ENCODE measurements at regions of chr1 and their contacts with region 1.

Region 1: DNA sequence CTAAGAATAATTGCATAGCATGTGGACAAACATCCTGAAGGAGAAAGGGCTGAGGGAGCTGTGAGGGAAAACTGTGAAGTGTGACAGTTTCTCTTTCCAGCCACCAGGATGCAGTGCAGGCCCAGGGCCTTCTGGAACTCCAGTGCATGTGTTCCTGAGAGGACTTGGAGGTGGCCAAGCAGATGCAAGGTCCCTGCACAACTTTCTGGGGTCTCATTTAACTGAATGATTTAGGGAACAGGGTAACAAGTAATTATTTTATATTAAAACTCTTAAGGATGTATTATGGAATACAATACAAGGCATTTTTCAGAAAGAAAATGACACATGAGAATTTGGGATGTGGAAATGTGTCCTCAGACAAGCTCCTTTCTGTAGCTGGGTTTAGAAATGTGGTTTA is 61.2 kb upstream of the MCOLN3 start:
- ATAC-seq: peak in 5 of 8 experiments; percentile 50 to 93 (median 78)
- H3K4me3 ChIP-seq: no peak overlapping the region
- H3K27ac ChIP-seq: no peak overlapping the region
- H3K4me1 ChIP-seq: no peaks in the 10 kb centered on the region

Region 2: GRCh38 chr1:84973498-84974334 is 135.8 kb before region 1 on chr1:
- in situ Hi-C with region 1: no loop called
- ATAC-seq: no peak
- H3K4me3 ChIP-seq: no peak overlapping the region
- H3K27ac ChIP-seq: no peak overlapping the region
- H3K4me1 ChIP-seq: peaks cover 0 to 4% of the 10 kb centered on the region in 2 donors

Region 3: DNA sequence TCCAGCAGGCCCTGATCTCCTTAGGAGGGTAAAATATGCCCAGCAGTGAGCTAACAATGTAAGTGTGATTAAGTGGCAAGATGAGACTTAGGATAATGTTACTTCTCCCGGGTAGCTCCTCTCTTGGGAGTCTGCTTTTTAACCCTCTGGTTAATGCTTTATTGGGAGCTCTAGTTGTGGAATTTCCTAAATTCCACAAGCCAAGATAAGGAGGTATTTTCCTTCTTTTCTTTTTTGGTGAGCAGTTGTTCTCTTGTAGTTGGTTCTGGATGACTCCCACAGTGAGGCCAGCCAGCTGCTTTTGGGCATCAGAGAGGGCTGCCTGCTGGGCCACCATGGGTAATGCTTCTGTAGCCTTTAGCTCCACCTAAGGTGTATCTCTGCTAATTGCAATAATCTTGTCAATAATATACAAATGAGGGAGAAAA is 130.7 kb after region 1 on chr1:
- in situ Hi-C with region 1: loop called in 1 of 9 experiments (anchors 10 kb)
- ATAC-seq: peak in 3 of 8 experiments; percentile 42 to 61 (median 54)
- H3K4me3 ChIP-seq: no peak overlapping the region
- H3K27ac ChIP-seq: no peak overlapping the region
- H3K4me1 ChIP-seq: no peaks in the 10 kb centered on the region

Region 4: GRCh38 chr1:85259118-85259911 is 149.8 kb after region 1 on chr1 and contains the start of gene C1orf52:
- in situ Hi-C with region 1: loop called in 2 of 9 experiments (anchors 10 to 25 kb)
- ATAC-seq: peak; percentile 76 to 96 (median 95)
- H3K4me3 ChIP-seq: peak within 1 kb of the TSS; percentile 64 to 95 (median 73)
- H3K27ac ChIP-seq: peak within 1 kb of the TSS; percentile 89 to 95
- H3K4me1 ChIP-seq: peaks cover 11 to 15% of the 10 kb centered on the region in 2 donors
- total RNA-seq, gene C1orf52: 33.8 to 95.3 (median 59.4) TPM